CD14-positive monocyte (primary cell): ENCODE measurements at regions of chr12 and their contacts with region 1.

Region 1: DNA sequence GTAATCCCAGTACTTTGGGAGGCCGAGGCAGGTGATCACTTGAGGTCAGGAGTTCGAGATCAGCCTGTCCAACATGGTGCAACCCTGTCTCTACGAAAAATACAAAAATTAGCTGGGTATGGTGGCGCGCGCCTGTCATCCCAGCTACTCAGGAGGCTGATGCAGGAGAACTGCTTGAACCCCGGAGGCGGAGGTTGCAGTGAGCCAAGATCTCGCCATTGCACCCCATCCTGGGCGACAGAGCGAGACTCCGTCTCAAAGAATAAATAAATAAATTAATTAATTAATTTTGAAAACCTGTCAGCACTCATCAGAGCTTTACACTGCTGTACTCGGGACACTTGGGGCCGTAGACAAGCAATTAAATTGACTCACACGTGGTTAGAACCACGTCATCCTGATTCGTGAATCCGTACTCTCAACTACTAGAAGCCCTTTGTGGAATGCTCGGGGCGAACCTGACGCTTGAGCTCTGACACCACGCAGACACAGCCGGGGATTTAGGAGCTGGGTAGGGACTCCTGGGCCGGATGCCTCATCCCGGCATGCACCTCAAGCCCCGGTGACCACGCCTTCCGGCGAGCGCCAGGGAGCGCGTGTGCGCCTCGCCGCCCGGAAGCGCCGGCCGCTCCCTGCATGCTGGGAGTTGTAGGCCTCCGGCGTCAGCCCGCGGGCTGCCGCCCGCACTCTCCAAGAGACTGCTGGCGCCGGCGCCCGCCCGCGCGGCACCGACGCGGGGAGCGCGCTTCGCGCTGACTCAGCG is at the start of gene XPOT:
- DNase-seq: peak; percentile 93 to 95 (median 95)
- H3K4me3 ChIP-seq: peak within 1 kb of the TSS; percentile 90 to 97 (median 97)
- H3K4me3 Mint-ChIP-seq: peak within 1 kb of the TSS; percentile 95 to 97
- H3K27ac ChIP-seq: peak within 1 kb of the TSS; percentile 93 to 97
- H3K27ac Mint-ChIP-seq: peak within 1 kb of the TSS; percentile 90 to 98 (median 96)
- H3K4me1 ChIP-seq: peaks cover 13 to 18% of the 10 kb centered on the region in 2 donors
- H3K4me1 Mint-ChIP-seq: peaks cover 15% of the 10 kb centered on the region
- H3K27me3 ChIP-seq: no peaks in the 10 kb centered on the region
- H3K27me3 Mint-ChIP-seq: peaks cover 2 to 9% (median 6%) of the 10 kb centered on the region in 3 donors
- CTCF ChIP-seq: no peak
- polyA plus RNA-seq, gene XPOT: 18.3 to 19.9 (median 19.3) TPM

Region 2: GRCh38 chr12:63917864-63918799 is 485.8 kb before region 1 on chr12:
- intact Hi-C with region 1: loop called in 1 of 2 experiments (anchors 10 kb)
- DNase-seq: peak; percentile 95 to 100 (median 97)
- H3K4me3 ChIP-seq: peak overlapping the region in 1 of 3 experiments; percentile 35
- H3K4me3 Mint-ChIP-seq: peak overlapping the region; percentile 64 to 82
- H3K27ac ChIP-seq: peak overlapping the region; percentile 58 to 84
- H3K27ac Mint-ChIP-seq: peak overlapping the region; percentile 92 to 99 (median 98)
- H3K4me1 ChIP-seq: peaks cover 31 to 36% of the 10 kb centered on the region in 2 donors
- H3K4me1 Mint-ChIP-seq: peaks cover 40% of the 10 kb centered on the region
- H3K27me3 ChIP-seq: no peaks in the 10 kb centered on the region
- H3K27me3 Mint-ChIP-seq: peaks cover 0 to 6% (median under 1%) of the 10 kb centered on the region in 3 donors
- CTCF ChIP-seq: no peak

Region 3: GRCh38 chr12:64222009-64222765 is 181.7 kb before region 1 on chr12 and contains the start of gene KICS2:
- intact Hi-C with region 1: loop called in 1 of 2 experiments (anchors 10 kb)
- DNase-seq: peak; percentile 90 to 97 (median 94)
- H3K4me3 ChIP-seq: peak within 1 kb of the TSS; percentile 68 to 92 (median 89)
- H3K4me3 Mint-ChIP-seq: peak within 1 kb of the TSS; percentile 99
- H3K27ac ChIP-seq: peak within 1 kb of the TSS; percentile 78 to 95
- H3K27ac Mint-ChIP-seq: peak within 1 kb of the TSS; percentile 92 to 99 (median 96)
- H3K4me1 ChIP-seq: peaks cover 14 to 22% of the 10 kb centered on the region in 2 donors
- H3K4me1 Mint-ChIP-seq: peaks cover 31% of the 10 kb centered on the region
- H3K27me3 ChIP-seq: no peaks in the 10 kb centered on the region
- H3K27me3 Mint-ChIP-seq: peaks cover 0 to 4% (median 4%) of the 10 kb centered on the region in 3 donors
- CTCF ChIP-seq: no peak
- polyA plus RNA-seq, gene KICS2: 2.7 to 5.5 (median 3.5) TPM

Region 4: DNA sequence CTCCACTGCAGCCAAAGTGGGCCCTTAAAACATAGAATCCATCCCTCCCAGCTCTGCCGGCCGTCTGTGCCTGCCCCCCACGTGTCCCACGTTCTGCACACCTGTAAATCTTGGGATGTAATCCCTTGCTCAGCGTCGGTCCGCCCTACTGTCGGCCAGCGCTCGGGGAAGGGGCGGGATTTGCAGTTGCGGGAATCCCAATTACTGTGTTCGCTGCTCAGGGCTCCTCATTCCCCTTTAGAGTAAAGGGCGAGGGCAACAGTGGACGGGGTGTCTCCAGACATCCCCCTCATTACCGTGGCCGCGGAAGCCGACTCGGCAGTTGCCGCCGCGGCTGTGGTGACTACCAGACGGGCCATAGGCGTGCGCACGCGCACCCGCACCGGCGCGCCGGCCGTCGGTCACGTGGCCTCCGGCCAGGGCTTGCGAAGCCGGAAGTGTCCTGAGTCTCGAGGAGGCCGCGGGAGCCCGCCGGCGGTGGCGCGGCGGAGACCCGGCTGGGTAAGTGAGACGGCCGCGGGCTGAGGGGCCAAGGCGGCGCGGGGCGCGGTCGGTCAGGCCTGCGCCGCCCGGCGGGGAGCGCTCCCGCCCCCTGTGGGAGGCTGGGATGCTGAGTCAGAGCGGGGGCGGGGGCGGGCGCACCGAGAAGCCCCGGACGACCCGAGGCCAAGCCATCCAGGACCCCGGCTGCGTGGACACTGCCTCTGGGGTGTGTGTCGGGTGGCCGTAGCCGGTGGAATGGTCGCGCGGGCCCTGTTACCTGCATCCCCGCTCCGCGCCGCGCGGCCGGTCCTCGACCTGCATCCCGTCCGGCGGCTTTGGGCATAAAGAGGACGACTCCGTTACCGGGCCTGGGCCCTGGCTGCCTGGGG is 48.0 kb after region 1 on chr12 and contains the start of gene TBK1:
- intact Hi-C with region 1: loop called (anchors 5 to 10 kb)
- DNase-seq: peak; percentile 84 to 92 (median 91)
- H3K4me3 ChIP-seq: peak within 1 kb of the TSS; percentile 70 to 98 (median 71)
- H3K4me3 Mint-ChIP-seq: peak within 1 kb of the TSS; percentile 91 to 96
- H3K27ac ChIP-seq: peak within 1 kb of the TSS; percentile 80 to 98
- H3K27ac Mint-ChIP-seq: peak within 1 kb of the TSS; percentile 94 to 97 (median 96)
- H3K4me1 ChIP-seq: peaks cover 13 to 20% of the 10 kb centered on the region in 2 donors
- H3K4me1 Mint-ChIP-seq: peaks cover 24% of the 10 kb centered on the region
- H3K27me3 ChIP-seq: no peaks in the 10 kb centered on the region
- H3K27me3 Mint-ChIP-seq: no peaks in the 10 kb centered on the region
- CTCF ChIP-seq: no peak
- polyA plus RNA-seq, gene TBK1: 14.3 to 24.7 (median 15.5) TPM